AG04450 (cell line): ENCODE measurements at regions of chr6 and their contacts with region 1.

Region 1: DNA sequence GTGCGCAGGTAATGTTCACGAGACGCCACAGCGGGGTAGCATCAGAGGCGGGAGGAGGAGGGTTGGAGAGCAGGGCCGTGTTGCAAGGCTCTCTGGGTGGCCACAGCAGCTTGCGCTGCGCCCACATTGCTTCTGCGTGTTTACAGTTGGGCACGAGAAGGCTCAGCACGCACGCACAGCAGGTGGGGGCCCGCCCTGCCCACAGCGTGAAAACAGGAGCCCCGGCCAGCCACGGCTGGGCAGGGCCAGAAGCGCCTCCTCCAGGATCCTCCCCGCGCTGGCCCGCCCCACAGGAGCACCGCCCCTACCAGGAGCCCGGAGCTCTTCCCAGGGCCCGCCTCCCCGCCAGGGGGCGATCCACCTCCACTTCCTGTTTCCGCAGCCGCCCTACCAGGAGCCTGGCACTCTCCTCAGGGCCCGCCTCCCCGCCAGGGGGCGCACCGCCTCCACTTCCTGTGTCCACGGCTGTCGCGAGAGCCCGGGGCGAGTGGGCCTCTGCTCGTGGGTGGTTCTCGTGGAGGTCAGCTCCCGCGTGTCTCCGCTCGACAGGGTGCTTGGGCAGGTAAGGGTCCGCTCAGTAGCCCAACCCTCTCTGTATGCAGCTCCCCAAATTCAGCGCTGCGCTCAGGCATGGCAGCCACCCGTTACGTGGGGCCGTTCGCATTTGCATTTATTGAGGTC is at the start of gene FAM50B:
- DNase-seq: peak; percentile 57
- H3K4me3 ChIP-seq: peak within 1 kb of the TSS; percentile 64
- H3K27ac ChIP-seq: peak within 1 kb of the TSS; percentile 65
- H3K27me3 ChIP-seq: no peaks in the 10 kb centered on the region
- CTCF ChIP-seq: peak; percentile 80
- polyA plus RNA-seq, gene FAM50B: 4.5 and 5.5 TPM in 2 replicates

Region 2: GRCh38 chr6:3742426-3743344 is 106.4 kb before region 1 on chr6:
- CTCF ChIA-PET with region 1: interaction called, 23 read pairs
- POLR2A ChIA-PET with region 1: no interaction called
- DNase-seq: no peak
- H3K4me3 ChIP-seq: no peak overlapping the region; the same call in 1 of the 2 replicates
- H3K27ac ChIP-seq: no peak overlapping the region
- H3K27me3 ChIP-seq: no peaks in the 10 kb centered on the region
- CTCF ChIP-seq: peak; percentile 92

Region 3: DNA sequence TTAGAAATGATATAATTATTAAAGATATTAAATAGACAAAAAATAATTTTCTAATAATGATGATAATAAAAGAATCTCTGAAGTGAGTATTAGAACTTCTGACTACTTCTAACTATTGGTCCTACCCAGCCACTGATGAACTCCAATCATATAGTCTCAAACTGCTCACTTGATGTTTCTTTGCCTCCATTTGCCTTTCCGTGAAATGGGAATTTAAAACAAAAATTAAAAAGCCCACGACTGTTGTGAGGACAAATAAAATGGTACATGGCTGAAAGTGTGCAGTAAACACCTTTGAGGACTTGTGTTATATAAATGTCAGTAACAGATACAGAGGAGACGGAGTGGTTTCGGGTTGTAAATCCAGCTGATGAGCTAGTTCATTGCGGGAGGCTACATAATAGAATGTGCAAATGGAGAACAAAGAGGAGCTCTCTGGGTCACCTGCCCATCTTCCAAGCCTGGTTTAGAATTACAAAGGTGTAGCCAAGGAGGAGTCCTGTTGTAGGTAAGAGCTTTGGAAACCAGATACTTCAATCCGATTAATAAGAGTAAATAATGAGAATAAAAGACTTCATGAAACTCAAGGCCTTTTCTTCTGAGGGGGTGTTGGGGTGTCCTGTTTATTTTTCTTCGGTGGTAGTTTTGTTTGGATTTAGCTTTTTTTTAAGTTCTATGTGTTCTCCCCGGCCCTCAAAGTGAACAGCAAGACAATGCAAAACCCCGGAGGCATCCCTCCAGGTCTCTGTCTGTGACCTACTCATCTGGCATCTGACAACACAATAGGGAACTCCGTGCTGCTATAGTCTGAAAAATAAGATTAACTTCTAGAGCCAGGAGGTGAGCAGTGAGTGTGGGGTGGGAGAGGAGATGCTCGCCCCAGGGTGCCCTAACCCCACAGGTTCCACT is 93.2 kb before region 1 on chr6:
- CTCF ChIA-PET with region 1: interaction called, 14 read pairs
- POLR2A ChIA-PET with region 1: interaction called, 4 read pairs
- DNase-seq: no peak
- H3K4me3 ChIP-seq: no peak overlapping the region
- H3K27ac ChIP-seq: no peak overlapping the region
- H3K27me3 ChIP-seq: no peaks in the 10 kb centered on the region
- CTCF ChIP-seq: no peak

Region 4: GRCh38 chr6:3929281-3929798 is 80.3 kb after region 1 on chr6:
- CTCF ChIA-PET with region 1: interaction called, 11 read pairs
- POLR2A ChIA-PET with region 1: no interaction called
- DNase-seq: no peak
- H3K4me3 ChIP-seq: no peak overlapping the region
- H3K27ac ChIP-seq: peak overlapping the region; percentile 31
- H3K27me3 ChIP-seq: no peaks in the 10 kb centered on the region
- CTCF ChIP-seq: no peak

Region 5: GRCh38 chr6:4008324-4009047 is 159.4 kb after region 1 on chr6:
- CTCF ChIA-PET with region 1: interaction called, 12 read pairs
- POLR2A ChIA-PET with region 1: no interaction called
- DNase-seq: peak; percentile 59
- H3K4me3 ChIP-seq: no peak overlapping the region
- H3K27ac ChIP-seq: no peak overlapping the region
- H3K27me3 ChIP-seq: no peaks in the 10 kb centered on the region
- CTCF ChIP-seq: peak; percentile 72

Region 6: DNA sequence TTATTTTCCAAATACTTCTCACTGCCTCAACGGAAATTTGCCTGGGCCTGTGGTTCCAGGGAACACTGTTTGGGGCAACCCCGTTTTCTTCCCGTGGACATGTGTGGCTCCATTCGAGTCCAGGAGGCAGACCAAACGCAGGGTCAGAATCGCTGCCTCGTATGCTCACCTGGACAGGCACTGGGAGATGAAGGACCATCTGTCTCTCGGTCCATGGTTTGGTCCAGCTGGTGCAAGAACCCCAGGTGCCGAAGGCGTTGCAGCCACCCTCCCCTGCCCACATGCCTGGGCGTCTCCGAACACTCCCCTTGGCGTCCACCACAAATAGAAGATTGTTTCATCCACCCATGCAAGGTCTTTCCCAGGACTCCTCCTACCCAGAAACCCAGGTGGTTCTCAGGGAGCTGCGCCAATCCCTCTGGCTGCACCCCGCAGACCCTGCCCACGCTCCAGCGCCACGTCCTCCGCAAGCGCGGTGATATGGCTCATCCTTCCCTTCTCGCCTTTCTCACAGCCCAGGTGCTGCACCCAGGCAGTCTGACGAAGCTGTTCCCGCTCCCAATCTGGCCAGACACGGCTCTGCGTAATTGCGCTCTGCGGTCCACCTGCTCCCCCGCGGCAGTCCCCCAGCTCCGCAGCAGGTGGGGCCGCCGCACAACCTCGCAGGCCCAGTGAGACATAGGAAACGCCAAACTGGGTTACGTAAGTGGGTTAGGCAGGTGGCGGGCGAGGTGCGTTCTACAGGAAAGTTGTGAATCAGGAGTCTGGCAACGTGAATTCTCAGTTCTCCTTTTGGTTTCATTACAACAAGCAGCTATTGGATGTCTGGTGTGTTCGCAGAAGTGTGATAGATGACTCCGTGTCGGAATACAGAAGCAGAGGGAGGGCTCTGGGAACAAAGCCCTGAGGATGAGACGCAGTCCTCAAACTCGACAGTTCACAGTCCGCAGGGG is 432.6 kb after region 1 on chr6:
- CTCF ChIA-PET with region 1: no interaction called
- POLR2A ChIA-PET with region 1: no interaction called
- DNase-seq: no peak
- H3K4me3 ChIP-seq: peak overlapping the region; percentile 48
- H3K27ac ChIP-seq: no peak overlapping the region
- H3K27me3 ChIP-seq: peaks cover 14% of the 10 kb centered on the region
- CTCF ChIP-seq: 0 out of 2 replicates have a peak, but pooled peaks have one; percentile 26

Region 7: DNA sequence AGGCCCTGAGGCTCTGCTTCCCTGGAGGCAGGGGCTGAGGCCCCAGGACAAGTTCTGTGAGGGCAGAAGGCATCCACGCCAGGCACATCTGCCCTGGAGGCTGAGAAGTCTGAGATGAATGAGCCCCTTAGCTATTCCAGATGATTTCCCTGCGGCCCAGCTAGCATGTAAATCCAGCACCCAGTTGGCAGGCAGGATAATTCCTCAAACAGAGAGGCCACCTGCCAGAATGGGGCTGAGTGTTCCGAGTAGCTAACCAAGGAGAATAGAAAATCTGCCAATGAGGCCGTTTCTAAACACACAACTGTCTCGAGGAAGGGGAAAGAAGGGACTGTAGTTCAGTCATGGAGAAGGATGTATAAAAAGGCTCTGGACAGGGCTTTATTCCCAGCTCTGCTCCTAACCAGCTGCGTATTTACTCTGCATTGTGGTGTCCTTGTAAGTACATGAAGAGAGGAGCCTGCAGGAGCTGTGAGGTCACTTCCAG is 715.8 kb after region 1 on chr6:
- CTCF ChIA-PET with region 1: no interaction called
- POLR2A ChIA-PET with region 1: no interaction called
- DNase-seq: no peak
- H3K4me3 ChIP-seq: no peak overlapping the region
- H3K27ac ChIP-seq: no peak overlapping the region
- H3K27me3 ChIP-seq: peaks cover 6% of the 10 kb centered on the region
- CTCF ChIP-seq: no peak